GM12878 (cell line): ENCODE measurements at regions of chr12 and their contacts with region 1.

Region 1: GRCh38 chr12:56759263-56759908 is 3.7 kb upstream of the HSD17B6 start:
- DNase-seq: no peak
- ATAC-seq: no peak
- H3K4me3 ChIP-seq: no peak overlapping the region
- H3K27ac ChIP-seq: no peak overlapping the region
- H3K4me1 ChIP-seq: no peaks in the 10 kb centered on the region
- H3K27me3 ChIP-seq: no peaks in the 10 kb centered on the region
- CTCF ChIP-seq: no peak
- EP300 ChIP-seq: no peak
- POLR2A ChIP-seq: no peak
- RAD21 ChIP-seq: no peak

Region 2: DNA sequence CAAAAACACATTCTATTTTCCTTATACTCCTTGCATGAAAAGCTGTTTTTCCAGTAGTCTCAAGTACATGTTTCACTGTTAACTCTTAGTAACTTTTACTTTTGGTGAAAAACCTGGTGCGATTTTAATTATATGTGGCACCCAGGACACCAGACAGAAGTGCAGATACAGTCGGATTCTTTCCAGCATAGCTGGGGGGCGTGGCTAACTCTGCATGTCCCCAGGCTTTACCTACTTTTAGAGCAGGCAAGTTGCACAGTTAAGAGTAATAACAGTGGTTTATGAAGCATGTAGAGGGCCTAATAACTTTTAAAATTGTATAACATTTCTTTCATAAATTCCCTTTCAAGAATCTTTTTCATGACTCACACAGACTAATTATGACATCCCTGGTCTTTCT is 74.4 kb after region 1 on chr12:
- CTCF ChIA-PET with region 1: interaction called, 4 read pairs
- POLR2A ChIA-PET with region 1: no interaction called
- RAD21 ChIA-PET with region 1: no interaction called
- SMC1A ChIA-PET with region 1: interaction called, 3 read pairs
- in situ Hi-C with region 1: no loop called
- intact Hi-C with region 1: loop called (anchors 5 kb)
- DNase-seq: no peak
- ATAC-seq: no peak
- H3K4me3 ChIP-seq: no peak overlapping the region
- H3K27ac ChIP-seq: no peak overlapping the region
- H3K4me1 ChIP-seq: no peaks in the 10 kb centered on the region
- H3K27me3 ChIP-seq: no peaks in the 10 kb centered on the region
- CTCF ChIP-seq: no peak
- EP300 ChIP-seq: no peak
- POLR2A ChIP-seq: no peak
- RAD21 ChIP-seq: no peak

Region 3: DNA sequence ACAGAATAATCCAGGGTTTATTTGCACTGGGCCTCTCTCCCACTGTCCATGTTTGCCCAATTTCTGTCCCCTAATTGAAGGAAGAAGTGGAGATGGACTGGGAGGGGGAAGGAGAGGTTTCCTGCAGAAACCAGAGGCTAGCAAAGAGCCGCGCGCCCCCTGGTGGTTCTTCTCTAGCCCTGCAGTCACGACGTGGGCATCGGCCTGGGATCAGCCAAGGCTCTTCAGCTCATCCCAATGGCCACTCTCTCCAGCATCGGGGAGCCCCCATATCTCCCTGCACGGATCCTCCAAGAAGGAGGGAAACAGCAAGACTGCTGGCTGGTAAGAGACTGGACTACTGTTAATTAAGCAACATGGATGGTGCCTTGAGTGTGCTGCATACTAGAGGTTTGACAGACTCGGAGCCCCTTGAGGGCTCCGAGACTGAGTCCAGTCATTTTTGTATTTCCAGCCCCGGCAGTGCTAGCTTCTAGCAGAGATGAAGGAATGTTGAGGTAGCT is 228.2 kb after region 1 on chr12:
- CTCF ChIA-PET with region 1: interaction called, 53 read pairs
- POLR2A ChIA-PET with region 1: interaction called, 5 read pairs
- RAD21 ChIA-PET with region 1: interaction called, 29 read pairs
- SMC1A ChIA-PET with region 1: interaction called, 30 read pairs
- in situ Hi-C with region 1: no loop called
- intact Hi-C with region 1: loop called (anchors 1 kb)
- DNase-seq: no peak
- ATAC-seq: peak; percentile 90
- H3K4me3 ChIP-seq: no peak overlapping the region
- H3K27ac ChIP-seq: no peak overlapping the region
- H3K4me1 ChIP-seq: peaks cover 18% of the 10 kb centered on the region
- H3K27me3 ChIP-seq: no peaks in the 10 kb centered on the region
- CTCF ChIP-seq: peak; percentile 93 to 97 (median 96)
- EP300 ChIP-seq: no peak
- POLR2A ChIP-seq: no peak
- RAD21 ChIP-seq: peak; percentile 88

Region 4: DNA sequence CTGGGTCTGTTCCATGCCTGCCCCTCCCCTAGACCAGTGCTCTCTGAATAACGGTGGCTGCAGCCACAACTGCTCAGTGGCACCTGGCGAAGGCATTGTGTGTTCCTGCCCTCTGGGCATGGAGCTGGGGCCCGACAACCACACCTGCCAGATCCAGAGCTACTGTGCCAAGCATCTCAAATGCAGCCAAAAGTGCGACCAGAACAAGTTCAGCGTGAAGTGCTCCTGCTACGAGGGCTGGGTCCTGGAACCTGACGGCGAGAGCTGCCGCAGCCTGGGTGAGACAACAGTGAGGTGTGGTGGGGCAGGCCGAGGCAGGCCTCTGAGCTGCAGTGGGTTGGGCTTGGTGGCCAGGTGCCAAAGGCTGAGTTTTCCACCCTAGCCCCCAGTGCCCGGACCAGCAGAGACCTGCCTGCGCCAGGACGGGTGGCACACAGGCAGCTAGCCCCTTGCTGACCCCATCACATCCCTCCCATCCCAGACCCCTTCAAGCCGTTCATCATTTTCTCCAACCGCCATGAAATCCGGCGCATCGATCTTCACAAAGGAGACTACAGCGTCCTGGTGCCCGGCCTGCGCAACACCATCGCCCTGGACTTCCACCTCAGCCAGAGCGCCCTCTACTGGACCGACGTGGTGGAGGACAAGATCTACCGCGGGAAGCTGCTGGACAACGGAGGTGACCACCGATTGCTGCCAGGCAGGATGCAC is 416.2 kb after region 1 on chr12:
- CTCF ChIA-PET with region 1: interaction called, 3 read pairs
- POLR2A ChIA-PET with region 1: no interaction called
- RAD21 ChIA-PET with region 1: no interaction called
- SMC1A ChIA-PET with region 1: no interaction called
- in situ Hi-C with region 1: loop called (anchors 5 kb)
- intact Hi-C with region 1: no loop called
- DNase-seq: no peak
- ATAC-seq: peak; percentile 60
- H3K4me3 ChIP-seq: no peak overlapping the region
- H3K27ac ChIP-seq: no peak overlapping the region
- H3K4me1 ChIP-seq: no peaks in the 10 kb centered on the region
- H3K27me3 ChIP-seq: no peaks in the 10 kb centered on the region; a peak in 1 of 4 replicates
- CTCF ChIP-seq: peak; percentile 53 to 78 (median 54)
- EP300 ChIP-seq: no peak
- POLR2A ChIP-seq: no peak
- RAD21 ChIP-seq: peak; percentile 27; the same call in 1 of the 2 replicates